ENCODE measurements at regions of chr11 and their contacts with region 1.

Region 1: DNA sequence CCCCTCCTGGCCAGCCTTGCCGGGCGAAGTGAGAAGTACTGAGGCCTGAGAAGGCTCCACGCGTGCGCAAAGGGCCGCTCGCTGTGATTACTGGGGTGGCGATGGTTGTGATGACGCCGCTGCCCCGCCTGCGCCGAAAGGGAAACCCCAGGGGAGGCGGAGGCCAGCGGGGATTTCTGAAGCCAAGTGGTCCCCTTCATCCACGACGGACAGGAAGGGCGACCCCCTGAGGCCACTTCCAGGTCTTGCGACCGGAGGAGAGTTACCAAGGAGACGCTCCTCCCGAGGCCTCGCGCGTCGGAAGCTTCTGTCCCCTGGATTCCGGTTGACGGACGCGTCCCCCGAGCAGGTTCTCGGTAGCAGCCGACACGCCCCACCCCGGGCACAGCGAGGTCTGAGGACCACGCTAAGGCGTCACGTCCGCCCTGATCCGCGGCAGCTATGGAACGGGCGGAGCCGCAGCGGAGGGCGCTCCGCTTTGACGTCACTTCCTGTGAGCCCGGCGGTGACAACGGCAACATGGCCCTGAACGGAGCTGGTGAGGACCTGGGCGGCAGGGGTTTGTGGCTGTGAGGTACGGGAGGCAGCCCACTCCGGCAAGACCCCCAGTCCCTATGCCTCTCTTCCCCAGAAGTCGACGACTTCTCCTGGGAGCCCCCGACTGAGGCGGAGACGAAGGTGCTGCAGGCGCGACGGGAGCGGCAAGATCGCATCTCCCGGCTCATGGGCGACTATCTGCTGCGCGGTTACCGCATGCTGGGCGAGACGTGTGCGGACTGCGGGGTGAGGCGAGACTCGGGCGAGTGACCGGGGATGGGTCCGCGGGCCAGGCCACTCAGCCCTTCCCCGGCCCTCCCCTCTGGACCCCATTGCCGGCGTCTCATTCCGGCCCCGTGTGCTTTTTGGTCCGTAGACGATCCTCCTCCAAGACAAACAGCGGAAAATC is at the start of gene ZNRD2:
- DNase-seq: peak; percentile 100
- H3K4me3 Mint-ChIP-seq: peak within 1 kb of the TSS; percentile 100
- H3K27ac Mint-ChIP-seq: peak within 1 kb of the TSS; percentile 95
- H3K4me1 Mint-ChIP-seq: peaks cover 62% of the 10 kb centered on the region
- H3K27me3 Mint-ChIP-seq: no peaks in the 10 kb centered on the region
- total RNA-seq, gene ZNRD2: 48.1 to 51.1 TPM

Region 2: GRCh38 chr11:65540297-65541092 is 29.8 kb before region 1 on chr11:
- CTCF ChIA-PET with region 1: interaction called, 176 read pairs
- POLR2A ChIA-PET with region 1: interaction called, 17 read pairs
- intact Hi-C with region 1: loop called (anchors 1 kb)
- DNase-seq: peak; percentile 94
- H3K4me3 Mint-ChIP-seq: peak overlapping the region; percentile 79
- H3K27ac Mint-ChIP-seq: peak overlapping the region; percentile 87
- H3K4me1 Mint-ChIP-seq: peaks cover 20% of the 10 kb centered on the region
- H3K27me3 Mint-ChIP-seq: no peaks in the 10 kb centered on the region

Region 3: GRCh38 chr11:65551572-65552398 is 18.5 kb before region 1 on chr11:
- CTCF ChIA-PET with region 1: interaction called, 176 read pairs
- POLR2A ChIA-PET with region 1: interaction called, 7 read pairs
- intact Hi-C with region 1: loop called (anchors 1 kb)
- DNase-seq: peak; percentile 77
- H3K4me3 Mint-ChIP-seq: peak overlapping the region; percentile 1
- H3K27ac Mint-ChIP-seq: peak overlapping the region; percentile 23
- H3K4me1 Mint-ChIP-seq: peaks cover 69% of the 10 kb centered on the region
- H3K27me3 Mint-ChIP-seq: no peaks in the 10 kb centered on the region

Region 4: GRCh38 chr11:65588199-65589054 is 18.2 kb after region 1 on chr11:
- CTCF ChIA-PET with region 1: interaction called, 126 read pairs
- POLR2A ChIA-PET with region 1: interaction called, 68 read pairs
- intact Hi-C with region 1: loop called (anchors 1 kb)
- DNase-seq: peak; percentile 90
- H3K4me3 Mint-ChIP-seq: peak overlapping the region; percentile 57
- H3K27ac Mint-ChIP-seq: peak overlapping the region; percentile 95
- H3K4me1 Mint-ChIP-seq: peaks cover 30% of the 10 kb centered on the region
- H3K27me3 Mint-ChIP-seq: no peaks in the 10 kb centered on the region

Region 5: DNA sequence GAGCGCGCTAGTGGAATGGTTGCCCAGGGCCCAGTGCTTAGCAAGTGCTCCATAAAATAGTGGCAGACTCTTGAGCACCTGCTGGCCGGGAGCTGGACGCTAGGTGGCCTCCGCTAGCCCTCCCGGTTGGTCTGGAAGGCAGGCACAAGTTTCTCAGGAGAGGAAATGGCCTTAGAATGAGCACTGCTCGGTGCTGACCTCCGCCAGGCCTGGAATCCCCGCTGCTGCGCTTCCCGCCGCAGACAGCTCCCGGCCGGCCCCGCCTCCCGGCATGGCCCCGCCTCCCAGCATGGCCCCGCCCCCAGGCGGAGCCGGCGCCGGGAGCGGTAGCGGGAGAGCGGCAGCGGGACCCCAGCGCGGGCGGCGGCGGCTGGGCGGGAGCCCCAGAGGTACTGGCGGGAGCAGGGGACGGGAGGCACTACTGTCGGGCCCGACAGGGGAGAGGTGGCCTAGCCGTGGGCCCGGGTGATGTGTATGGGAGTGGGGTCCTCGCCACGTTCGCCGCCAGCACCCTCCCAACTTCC is 67.6 kb after region 1 on chr11 and contains the start of gene SIPA1:
- CTCF ChIA-PET with region 1: interaction called, 3 read pairs
- POLR2A ChIA-PET with region 1: interaction called, 4 read pairs
- intact Hi-C with region 1: loop called (anchors 2 kb)
- DNase-seq: peak; percentile 75
- H3K4me3 Mint-ChIP-seq: peak within 1 kb of the TSS; percentile 85
- H3K27ac Mint-ChIP-seq: peak within 1 kb of the TSS; percentile 95
- H3K4me1 Mint-ChIP-seq: peaks cover 38% of the 10 kb centered on the region
- H3K27me3 Mint-ChIP-seq: no peaks in the 10 kb centered on the region
- total RNA-seq, gene SIPA1: 163 to 167 TPM

Region 6: GRCh38 chr11:65786786-65787636 is 216.8 kb after region 1 on chr11 and contains the start of gene OVOL1:
- CTCF ChIA-PET with region 1: no interaction called
- POLR2A ChIA-PET with region 1: no interaction called
- intact Hi-C with region 1: no loop called
- DNase-seq: peak; percentile 27
- H3K4me3 Mint-ChIP-seq: peak within 1 kb of the TSS; percentile 37
- H3K27ac Mint-ChIP-seq: no peak within 1 kb of the TSS
- H3K4me1 Mint-ChIP-seq: peaks cover 25% of the 10 kb centered on the region
- H3K27me3 Mint-ChIP-seq: peaks cover 38% of the 10 kb centered on the region
- total RNA-seq, gene OVOL1: not detected